ENCODE measurements at regions of chr10 and their contacts with region 1.

Region 1: GRCh38 chr10:3805791-3806461 is 20.9 kb upstream of the KLF6 start:
- DNase-seq: peak; percentile 87
- H3K4me3 Mint-ChIP-seq: peak overlapping the region; percentile 48
- H3K27ac Mint-ChIP-seq: no peak overlapping the region
- H3K4me1 Mint-ChIP-seq: peaks cover 64% of the 10 kb centered on the region
- H3K27me3 Mint-ChIP-seq: no peaks in the 10 kb centered on the region

Region 2: DNA sequence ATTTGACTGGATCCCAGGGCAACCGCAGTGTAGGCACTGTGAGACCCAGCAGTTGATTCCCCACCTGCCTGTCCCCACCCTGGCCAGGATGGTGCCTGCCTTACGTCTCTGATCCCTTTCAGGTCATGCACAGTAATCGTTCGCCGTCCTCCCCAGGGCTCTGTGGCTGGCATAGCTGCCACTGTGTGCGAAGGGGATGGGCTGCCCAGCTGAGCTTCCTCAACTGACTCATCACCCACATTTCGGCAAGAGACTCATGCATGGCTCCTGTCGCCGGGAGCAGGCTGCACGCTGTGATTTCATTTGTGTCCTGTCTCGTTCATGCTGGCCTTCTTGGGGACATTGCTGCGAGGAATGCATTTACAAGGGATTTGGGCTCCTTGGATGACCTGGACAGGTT is 273.3 kb before region 1 on chr10:
- intact Hi-C with region 1: no loop called
- DNase-seq: no peak
- H3K4me3 Mint-ChIP-seq: no peak overlapping the region
- H3K27ac Mint-ChIP-seq: no peak overlapping the region
- H3K4me1 Mint-ChIP-seq: peaks cover 3% of the 10 kb centered on the region
- H3K27me3 Mint-ChIP-seq: peaks cover 13% of the 10 kb centered on the region

Region 3: DNA sequence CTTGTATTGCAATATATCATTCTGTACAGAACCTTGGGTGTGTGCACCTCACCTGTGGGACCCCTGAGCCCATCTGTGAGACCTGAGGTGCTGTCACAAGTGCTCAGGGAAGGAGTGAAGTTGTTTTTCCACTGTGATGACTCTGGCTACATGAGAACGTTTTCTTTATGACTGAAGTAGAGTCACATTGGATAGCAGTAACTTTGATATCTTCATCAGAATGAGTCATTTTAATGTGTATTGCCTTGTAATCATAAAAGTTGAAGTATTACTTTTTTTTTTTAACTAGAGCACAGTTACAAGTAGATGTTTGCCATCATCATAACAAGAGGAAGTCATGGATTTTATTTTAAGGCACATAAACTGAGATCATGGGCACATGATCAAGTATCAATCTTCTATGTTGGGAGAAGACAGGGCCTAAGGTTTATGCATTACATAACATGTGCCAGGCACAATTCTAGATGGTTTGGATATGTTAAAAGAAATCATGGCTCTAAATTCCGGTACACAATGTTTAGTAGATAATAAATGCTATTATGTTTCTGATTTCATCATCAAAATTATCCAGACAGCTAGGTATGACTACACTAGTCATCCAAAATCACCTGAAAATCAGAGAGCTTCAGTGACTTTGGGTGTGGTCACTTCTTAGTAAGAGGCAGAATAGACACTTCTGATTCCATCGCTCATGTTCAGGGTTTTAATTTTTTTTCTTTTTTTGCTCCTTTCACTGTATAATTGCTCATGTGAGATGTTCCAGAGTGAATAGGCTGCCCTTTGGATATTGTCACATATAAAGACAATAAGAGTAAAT is 61.7 kb after region 1 on chr10:
- intact Hi-C with region 1: loop called (anchors 1 kb)
- DNase-seq: no peak
- H3K4me3 Mint-ChIP-seq: no peak overlapping the region
- H3K27ac Mint-ChIP-seq: peak overlapping the region; percentile 91
- H3K4me1 Mint-ChIP-seq: peaks cover 61% of the 10 kb centered on the region
- H3K27me3 Mint-ChIP-seq: no peaks in the 10 kb centered on the region

Region 4: DNA sequence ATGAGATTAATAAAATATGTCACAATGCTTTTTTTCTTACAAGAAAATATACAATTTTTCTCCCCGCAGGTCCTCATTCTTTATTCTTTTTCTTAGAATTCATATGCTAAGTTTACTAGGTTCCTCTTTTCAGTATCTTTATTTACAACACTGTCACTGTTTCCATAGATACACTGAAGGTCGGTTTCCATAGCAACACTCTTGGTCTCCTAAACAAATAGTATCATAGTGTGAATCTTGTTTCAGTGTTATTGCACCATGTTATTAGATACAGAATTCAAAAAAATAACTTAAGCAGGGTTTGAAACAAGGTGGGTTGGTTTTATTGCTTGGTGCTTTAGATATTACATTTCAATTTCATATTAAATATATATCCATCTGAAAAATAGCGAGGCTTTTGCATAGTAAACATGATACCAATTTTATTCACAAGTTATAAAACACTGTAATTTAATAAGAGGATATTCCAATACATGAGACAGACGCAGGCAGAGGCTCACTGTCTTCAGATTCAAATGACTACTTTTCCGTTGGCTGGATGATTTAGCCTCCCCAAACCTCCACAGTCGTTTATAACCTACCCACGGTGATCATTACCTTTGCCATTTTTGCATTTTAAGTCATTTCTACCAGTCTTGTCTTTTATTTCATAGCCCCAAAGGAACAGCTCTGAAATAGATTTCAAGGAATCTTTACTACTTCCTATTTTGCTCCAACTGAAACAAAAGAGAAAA is 68.0 kb after region 1 on chr10:
- intact Hi-C with region 1: loop called (anchors 1 kb)
- DNase-seq: peak; percentile 81
- H3K4me3 Mint-ChIP-seq: peak overlapping the region; percentile 14
- H3K27ac Mint-ChIP-seq: peak overlapping the region; percentile 88
- H3K4me1 Mint-ChIP-seq: peaks cover 52% of the 10 kb centered on the region
- H3K27me3 Mint-ChIP-seq: no peaks in the 10 kb centered on the region

Region 5: DNA sequence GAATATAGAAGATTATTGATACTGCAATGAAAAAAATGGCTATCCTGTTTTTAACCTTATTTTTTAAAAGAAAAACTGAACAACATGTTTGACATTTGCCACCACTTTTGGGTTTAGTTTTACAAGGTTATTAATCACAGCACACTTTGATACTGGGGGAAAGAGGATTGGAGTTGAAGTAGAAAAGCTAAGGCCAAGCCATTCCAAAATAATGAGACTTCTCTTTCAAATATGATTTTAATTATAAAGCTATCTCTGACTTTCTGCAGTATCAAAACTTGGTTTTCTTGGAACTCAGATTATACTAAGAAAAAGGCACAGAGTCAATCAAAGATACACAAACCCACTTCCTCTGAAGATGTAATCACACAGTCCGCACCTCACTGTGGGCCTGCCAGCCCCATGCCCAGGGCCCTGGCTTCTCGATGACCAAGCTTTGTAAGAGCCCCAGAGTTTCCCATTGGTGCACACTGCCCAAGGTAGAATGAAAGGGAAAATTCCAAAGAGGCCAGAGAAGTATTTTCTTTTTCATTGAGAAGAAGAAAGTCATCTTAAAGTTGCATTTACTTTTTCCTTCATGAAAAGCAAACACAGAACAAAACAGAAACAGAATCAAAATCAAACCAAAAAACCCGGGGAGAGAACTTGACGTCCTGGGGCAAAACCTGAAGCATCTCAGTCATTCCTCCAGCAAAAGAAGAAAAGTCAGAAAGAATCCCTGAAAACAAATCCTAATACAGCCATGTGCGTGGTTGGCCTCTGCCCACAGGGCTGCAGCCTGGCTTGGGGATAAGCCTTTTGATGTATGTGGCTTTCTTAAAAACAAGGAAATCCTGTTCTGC is 166.8 kb after region 1 on chr10:
- intact Hi-C with region 1: loop called (anchors 5 kb)
- DNase-seq: peak; percentile 87
- H3K4me3 Mint-ChIP-seq: peak overlapping the region; percentile 88
- H3K27ac Mint-ChIP-seq: peak overlapping the region; percentile 99
- H3K4me1 Mint-ChIP-seq: peaks cover 41% of the 10 kb centered on the region
- H3K27me3 Mint-ChIP-seq: no peaks in the 10 kb centered on the region

Region 6: DNA sequence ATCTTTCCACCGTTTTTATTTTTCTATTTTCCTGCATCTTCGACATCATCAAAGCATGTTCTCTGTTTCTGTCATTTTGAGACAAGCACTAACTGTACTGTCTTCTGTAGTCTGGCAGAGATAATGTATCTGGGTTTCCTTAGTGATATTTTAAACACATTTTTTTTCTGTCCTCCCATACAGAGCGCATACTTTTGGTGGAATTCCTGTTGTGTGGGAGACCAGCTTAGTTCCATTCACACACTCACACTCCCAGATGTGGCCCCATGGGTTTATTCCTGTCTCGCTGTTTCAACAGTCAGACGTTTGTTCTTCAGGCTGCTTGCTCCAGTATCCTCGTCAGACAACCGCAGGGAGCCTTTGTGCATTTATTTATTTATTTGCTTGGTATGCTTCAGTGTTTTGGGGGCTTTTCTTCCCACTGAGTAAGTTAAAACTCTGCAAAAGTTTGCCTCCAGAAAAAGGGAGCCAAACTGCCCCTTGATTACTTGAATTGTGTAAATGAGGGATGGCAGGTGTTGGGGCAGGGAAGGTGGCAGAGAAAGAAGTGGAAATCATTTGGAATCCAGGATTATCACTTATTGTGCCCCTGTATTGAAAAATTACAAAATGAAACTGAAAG is 435.9 kb after region 1 on chr10:
- intact Hi-C with region 1: loop called (anchors 10 kb)
- DNase-seq: no peak
- H3K4me3 Mint-ChIP-seq: no peak overlapping the region
- H3K27ac Mint-ChIP-seq: no peak overlapping the region
- H3K4me1 Mint-ChIP-seq: peaks cover 38% of the 10 kb centered on the region
- H3K27me3 Mint-ChIP-seq: no peaks in the 10 kb centered on the region

Region 7: DNA sequence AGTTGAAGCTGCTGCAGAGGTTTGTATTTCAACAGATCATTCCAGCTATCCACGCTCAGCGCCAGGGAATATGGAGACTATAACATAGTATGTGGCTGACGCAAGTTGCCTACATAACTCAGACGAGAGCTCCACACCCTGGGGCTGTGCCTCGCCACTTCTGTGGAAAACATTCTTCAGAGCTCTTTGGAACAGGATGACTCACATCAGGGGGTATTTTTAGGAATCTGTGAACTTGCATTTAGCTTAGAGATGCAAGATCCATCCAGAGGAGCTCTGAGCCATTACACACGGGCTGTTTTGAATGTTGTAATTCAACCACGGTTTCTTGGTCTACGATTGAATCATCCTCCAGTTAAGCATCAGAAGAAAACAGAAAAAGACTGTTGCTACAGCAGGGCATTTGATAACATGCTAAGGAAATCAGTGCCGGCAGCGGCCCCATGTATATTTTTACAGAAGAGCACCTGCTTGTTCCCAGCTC is 538.6 kb after region 1 on chr10:
- intact Hi-C with region 1: loop called (anchors 10 kb)
- DNase-seq: no peak
- H3K4me3 Mint-ChIP-seq: no peak overlapping the region
- H3K27ac Mint-ChIP-seq: peak overlapping the region; percentile 40
- H3K4me1 Mint-ChIP-seq: peaks cover 19% of the 10 kb centered on the region
- H3K27me3 Mint-ChIP-seq: peaks cover 3% of the 10 kb centered on the region